ENCODE measurements at regions of chr2 and their contacts with region 1.

Region 1: DNA sequence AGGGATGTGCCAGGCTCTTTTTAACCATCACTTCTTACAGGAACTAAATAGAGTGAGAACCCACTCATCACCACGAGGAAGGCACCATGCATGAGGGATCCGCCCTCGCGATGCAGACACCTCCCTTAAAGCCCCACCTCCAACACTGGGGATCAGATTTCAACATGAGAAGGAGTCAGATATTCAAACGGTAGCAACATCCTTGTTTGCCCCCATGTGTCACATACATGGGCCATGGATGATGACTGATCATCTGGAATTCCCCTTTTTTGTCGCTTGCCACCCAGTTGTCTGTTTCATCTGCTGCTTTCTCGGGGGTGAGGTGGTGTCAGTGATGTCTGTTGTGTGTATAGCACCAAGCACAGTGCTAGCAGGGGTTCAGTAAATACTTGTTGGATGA is 57.9 kb downstream of the NCK2 start:
- DNase-seq: peak in 34 of 35 experiments; percentile 25 to 92 (median 71)
- ATAC-seq: peak; percentile 63 to 77 (median 66)
- H3K4me3 ChIP-seq: no peak overlapping the region
- H3K4me3 Mint-ChIP-seq: peak overlapping the region; percentile 29 to 80 (median 41)
- H3K27ac ChIP-seq: peak overlapping the region; percentile 84
- H3K27ac Mint-ChIP-seq: peak overlapping the region; percentile 98 to 99
- H3K4me1 ChIP-seq: peaks cover 66 to 82% of the 10 kb centered on the region in 2 experiments
- H3K4me1 Mint-ChIP-seq: peaks cover 95 to 97% (median 96%) of the 10 kb centered on the region in 3 donors
- H3K27me3 ChIP-seq: no peaks in the 10 kb centered on the region
- H3K27me3 Mint-ChIP-seq: no peaks in the 10 kb centered on the region

Region 2: DNA sequence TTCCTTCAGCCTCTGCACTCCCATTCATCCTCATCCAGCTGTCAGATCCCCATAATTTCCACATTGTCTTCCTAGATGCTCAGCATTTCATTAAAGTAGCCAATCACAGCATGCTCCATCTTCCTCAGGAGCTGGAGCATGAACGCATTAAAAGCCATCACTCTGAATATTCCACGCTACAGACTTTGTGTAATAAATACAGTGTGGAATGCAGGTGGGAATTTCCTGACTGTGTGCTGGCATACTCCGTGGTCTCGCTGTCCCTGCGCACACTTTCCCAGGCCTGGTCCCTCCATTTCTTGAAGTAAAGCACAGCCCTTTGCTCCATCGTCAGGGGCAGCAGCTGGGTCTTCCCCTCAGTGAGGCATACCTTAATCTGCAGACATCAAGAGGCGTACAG is 181.5 kb before region 1 on chr2:
- CTCF ChIA-PET with region 1: no interaction called
- POLR2A ChIA-PET with region 1: interaction called in 1 of 2 experiments, 16 read pairs
- DNase-seq: no peak
- ATAC-seq: no peak
- H3K4me3 ChIP-seq: no peak overlapping the region
- H3K4me3 Mint-ChIP-seq: no peak overlapping the region
- H3K27ac ChIP-seq: no peak overlapping the region
- H3K27ac Mint-ChIP-seq: no peak overlapping the region
- H3K4me1 ChIP-seq: no peaks in the 10 kb centered on the region
- H3K4me1 Mint-ChIP-seq: peaks cover 2 to 8% (median 5%) of the 10 kb centered on the region in 3 donors
- H3K27me3 ChIP-seq: peaks cover 0 to 31% of the 10 kb centered on the region in 2 experiments
- H3K27me3 Mint-ChIP-seq: peaks cover 9 to 18% of the 10 kb centered on the region in 2 donors

Region 3: GRCh38 chr2:105895990-105896764 is 93.6 kb after region 1 on chr2:
- CTCF ChIA-PET with region 1: no interaction called
- POLR2A ChIA-PET with region 1: no interaction called
- DNase-seq: peak in 26 of 35 experiments; percentile 11 to 65 (median 24)
- ATAC-seq: peak; percentile 70 to 91 (median 87)
- H3K4me3 ChIP-seq: no peak overlapping the region
- H3K4me3 Mint-ChIP-seq: peak overlapping the region in 1 of 3 donors; percentile 42
- H3K27ac ChIP-seq: peak overlapping the region; percentile 5
- H3K27ac Mint-ChIP-seq: peak overlapping the region; percentile 85 to 87
- H3K4me1 ChIP-seq: peaks cover 11 to 24% of the 10 kb centered on the region in 2 experiments
- H3K4me1 Mint-ChIP-seq: peaks cover 56 to 63% (median 56%) of the 10 kb centered on the region in 3 donors
- H3K27me3 ChIP-seq: no peaks in the 10 kb centered on the region
- H3K27me3 Mint-ChIP-seq: no peaks in the 10 kb centered on the region